ENCODE measurements at regions of chr3 and their contacts with region 1.

Region 1: GRCh38 chr3:190120269-190121060 is at the start of gene P3H2:
- DNase-seq: peak; percentile 91
- H3K4me3 Mint-ChIP-seq: peak within 1 kb of the TSS; percentile 95
- H3K27ac Mint-ChIP-seq: peak within 1 kb of the TSS; percentile 70
- H3K4me1 Mint-ChIP-seq: peaks cover 51% of the 10 kb centered on the region
- H3K27me3 Mint-ChIP-seq: no peaks in the 10 kb centered on the region
- CTCF ChIP-seq: peak; percentile 32
- total RNA-seq, gene P3H2: 19.8 and 60.2 TPM in 2 replicates

Region 2: GRCh38 chr3:189477614-189478013 is 642.9 kb before region 1 on chr3:
- CTCF ChIA-PET with region 1: no interaction called
- POLR2A ChIA-PET with region 1: no interaction called
- intact Hi-C with region 1: no loop called
- DNase-seq: no peak
- H3K4me3 Mint-ChIP-seq: no peak overlapping the region
- H3K27ac Mint-ChIP-seq: no peak overlapping the region
- H3K4me1 Mint-ChIP-seq: peaks cover 5% of the 10 kb centered on the region
- H3K27me3 Mint-ChIP-seq: no peaks in the 10 kb centered on the region
- CTCF ChIP-seq: no peak

Region 3: DNA sequence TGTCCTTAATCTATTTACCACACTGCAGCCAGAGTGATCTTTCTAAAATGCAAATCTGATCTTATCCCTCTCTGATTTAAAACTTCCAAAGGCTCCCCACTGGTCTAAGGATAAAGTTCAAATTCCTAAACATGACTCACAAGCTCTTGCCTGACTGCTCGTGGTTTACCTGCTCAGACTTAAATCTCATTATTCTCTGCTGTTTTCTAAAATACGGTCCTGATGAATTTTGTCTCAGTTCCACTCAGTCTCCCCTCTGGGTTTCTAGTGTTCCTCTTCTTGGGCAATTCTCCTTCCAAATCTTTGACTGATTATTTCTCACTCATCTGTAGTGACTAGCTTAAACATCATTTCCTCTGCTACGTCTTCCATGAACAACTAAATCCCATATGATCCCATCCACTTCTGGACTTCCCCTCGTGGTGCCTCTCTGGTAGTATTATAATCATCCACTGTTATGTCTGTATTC is 108.1 kb before region 1 on chr3:
- CTCF ChIA-PET with region 1: interaction called, 11 read pairs
- POLR2A ChIA-PET with region 1: interaction called, 22 read pairs
- intact Hi-C with region 1: loop called (anchors 1 kb)
- DNase-seq: peak; percentile 61
- H3K4me3 Mint-ChIP-seq: peak overlapping the region; percentile 34
- H3K27ac Mint-ChIP-seq: peak overlapping the region; percentile 64
- H3K4me1 Mint-ChIP-seq: peaks cover 39% of the 10 kb centered on the region
- H3K27me3 Mint-ChIP-seq: no peaks in the 10 kb centered on the region
- CTCF ChIP-seq: no peak

Region 4: GRCh38 chr3:190038050-190038933 is 82.2 kb before region 1 on chr3:
- CTCF ChIA-PET with region 1: interaction called, 10 read pairs
- POLR2A ChIA-PET with region 1: interaction called, 132 read pairs
- intact Hi-C with region 1: loop called (anchors 5 kb)
- DNase-seq: peak; percentile 95
- H3K4me3 Mint-ChIP-seq: peak overlapping the region; percentile 54
- H3K27ac Mint-ChIP-seq: peak overlapping the region; percentile 69
- H3K4me1 Mint-ChIP-seq: peaks cover 30% of the 10 kb centered on the region
- H3K27me3 Mint-ChIP-seq: no peaks in the 10 kb centered on the region
- CTCF ChIP-seq: no peak

Region 5: DNA sequence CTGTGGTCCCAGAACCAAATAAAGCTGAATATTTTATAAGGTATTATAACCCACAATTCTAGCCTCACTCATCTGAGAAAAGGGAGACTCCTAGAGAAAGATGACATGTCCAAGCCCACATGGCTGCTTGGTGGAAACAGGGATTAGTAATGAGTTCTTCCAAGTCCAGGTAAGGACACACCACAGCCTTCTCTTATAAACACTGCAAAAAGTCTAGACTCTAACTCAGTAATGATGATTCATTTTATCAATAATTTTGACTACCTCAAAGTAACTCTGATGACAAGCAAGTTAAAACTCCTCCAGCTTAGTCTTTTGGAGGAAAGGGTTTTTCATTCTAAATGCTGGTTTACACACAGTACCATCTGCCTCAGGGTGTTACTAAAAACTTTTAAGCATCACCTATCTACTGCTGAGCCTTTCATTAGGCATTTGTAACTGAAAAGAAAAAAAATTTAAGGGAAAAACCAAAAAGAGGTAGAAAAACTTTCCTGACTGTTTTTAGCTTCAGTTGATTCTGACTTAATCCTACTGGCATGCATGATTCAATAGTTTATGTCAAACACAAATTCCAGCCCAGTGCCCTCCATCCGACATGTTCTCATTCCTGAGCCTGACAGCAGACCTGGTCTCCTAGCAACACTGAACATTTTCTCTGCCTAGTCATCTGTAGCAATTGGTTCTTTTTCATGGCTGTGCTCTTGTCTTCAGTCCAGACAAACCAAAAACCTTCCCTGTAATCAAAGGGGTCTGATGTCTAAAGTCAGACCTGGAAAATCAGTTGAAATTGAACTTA is 43.7 kb before region 1 on chr3:
- CTCF ChIA-PET with region 1: no interaction called
- POLR2A ChIA-PET with region 1: interaction called, 8 read pairs
- intact Hi-C with region 1: loop called (anchors 1 kb)
- DNase-seq: peak; percentile 73
- H3K4me3 Mint-ChIP-seq: no peak overlapping the region
- H3K27ac Mint-ChIP-seq: peak overlapping the region; percentile 92
- H3K4me1 Mint-ChIP-seq: peaks cover 28% of the 10 kb centered on the region
- H3K27me3 Mint-ChIP-seq: no peaks in the 10 kb centered on the region
- CTCF ChIP-seq: no peak

Region 6: DNA sequence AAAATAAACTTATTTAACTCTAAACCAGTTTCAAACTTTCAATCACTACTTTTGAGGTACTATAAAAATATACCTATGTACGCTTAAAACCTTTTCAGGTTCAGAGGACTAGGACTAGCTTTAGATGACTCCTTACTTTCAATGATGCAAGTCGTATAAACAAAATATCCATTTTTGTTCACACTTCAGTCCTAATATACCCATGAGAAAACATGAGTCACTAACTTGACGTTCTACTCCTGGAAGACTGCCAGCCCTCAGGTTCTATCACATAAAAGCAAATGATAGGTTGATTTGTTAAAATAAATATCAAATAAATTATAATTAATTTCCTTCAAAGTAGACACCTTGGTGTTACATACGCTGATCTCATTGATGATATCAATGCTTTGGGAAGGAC is 10.9 kb after region 1 on chr3:
- CTCF ChIA-PET with region 1: interaction called, 11 read pairs
- POLR2A ChIA-PET with region 1: interaction called, 21 read pairs
- intact Hi-C with region 1: no loop called
- DNase-seq: peak; percentile 93
- H3K4me3 Mint-ChIP-seq: no peak overlapping the region
- H3K27ac Mint-ChIP-seq: peak overlapping the region; percentile 85
- H3K4me1 Mint-ChIP-seq: peaks cover 7% of the 10 kb centered on the region
- H3K27me3 Mint-ChIP-seq: no peaks in the 10 kb centered on the region
- CTCF ChIP-seq: no peak

Region 7: GRCh38 chr3:190435618-190436017 is 315.2 kb after region 1 on chr3:
- CTCF ChIA-PET with region 1: no interaction called
- POLR2A ChIA-PET with region 1: no interaction called
- intact Hi-C with region 1: no loop called
- DNase-seq: no peak
- H3K4me3 Mint-ChIP-seq: no peak overlapping the region
- H3K27ac Mint-ChIP-seq: peak overlapping the region; percentile 29
- H3K4me1 Mint-ChIP-seq: peaks cover 18% of the 10 kb centered on the region
- H3K27me3 Mint-ChIP-seq: no peaks in the 10 kb centered on the region
- CTCF ChIP-seq: no peak